ENCODE measurements at regions of chr5 and their contacts with region 1.

Region 1: GRCh38 chr5:79560771-79561524 is 47.0 kb upstream of the HOMER1 start:
- DNase-seq: peak in 1 of 2 donors; percentile 15
- ATAC-seq: peak; percentile 77 to 87 (median 85)
- H3K4me3 ChIP-seq: no peak overlapping the region
- H3K4me3 Mint-ChIP-seq: peak overlapping the region; percentile 29
- H3K27ac ChIP-seq: peak overlapping the region; percentile 73
- H3K27ac Mint-ChIP-seq: peak overlapping the region; percentile 92 to 97
- H3K4me1 ChIP-seq: peaks cover 14% of the 10 kb centered on the region
- H3K4me1 Mint-ChIP-seq: peaks cover 27 to 42% of the 10 kb centered on the region in 2 donors
- H3K27me3 ChIP-seq: no peaks in the 10 kb centered on the region
- H3K27me3 Mint-ChIP-seq: no peaks in the 10 kb centered on the region
- CTCF ChIP-seq: no peak

Region 2: GRCh38 chr5:79514391-79515105 is 46.4 kb before region 1 on chr5:
- intact Hi-C with region 1: loop called (anchors 5 kb)
- DNase-seq: peak; percentile 90 to 98
- ATAC-seq: peak; percentile 78 to 90 (median 82)
- H3K4me3 ChIP-seq: peak overlapping the region; percentile 88
- H3K4me3 Mint-ChIP-seq: peak overlapping the region; percentile 100
- H3K27ac ChIP-seq: peak overlapping the region; percentile 98
- H3K27ac Mint-ChIP-seq: peak overlapping the region; percentile 97 to 99
- H3K4me1 ChIP-seq: peaks cover 15% of the 10 kb centered on the region
- H3K4me1 Mint-ChIP-seq: peaks cover 23 to 25% of the 10 kb centered on the region in 2 donors
- H3K27me3 ChIP-seq: peaks cover 27% of the 10 kb centered on the region
- H3K27me3 Mint-ChIP-seq: peaks cover 24 to 32% of the 10 kb centered on the region in 2 donors
- CTCF ChIP-seq: no peak

Region 3: GRCh38 chr5:79612667-79613198 is 51.8 kb after region 1 on chr5:
- intact Hi-C with region 1: loop called (anchors 5 kb)
- DNase-seq: no peak
- ATAC-seq: peak in 2 of 3 donors; percentile 3 to 10
- H3K4me3 ChIP-seq: peak overlapping the region; percentile 99
- H3K4me3 Mint-ChIP-seq: peak overlapping the region; percentile 98
- H3K27ac ChIP-seq: peak overlapping the region; percentile 98
- H3K27ac Mint-ChIP-seq: peak overlapping the region; percentile 94 to 98
- H3K4me1 ChIP-seq: peaks cover 12% of the 10 kb centered on the region
- H3K4me1 Mint-ChIP-seq: peaks cover 50 to 54% of the 10 kb centered on the region in 2 donors
- H3K27me3 ChIP-seq: no peaks in the 10 kb centered on the region
- H3K27me3 Mint-ChIP-seq: no peaks in the 10 kb centered on the region
- CTCF ChIP-seq: no peak

Region 4: DNA sequence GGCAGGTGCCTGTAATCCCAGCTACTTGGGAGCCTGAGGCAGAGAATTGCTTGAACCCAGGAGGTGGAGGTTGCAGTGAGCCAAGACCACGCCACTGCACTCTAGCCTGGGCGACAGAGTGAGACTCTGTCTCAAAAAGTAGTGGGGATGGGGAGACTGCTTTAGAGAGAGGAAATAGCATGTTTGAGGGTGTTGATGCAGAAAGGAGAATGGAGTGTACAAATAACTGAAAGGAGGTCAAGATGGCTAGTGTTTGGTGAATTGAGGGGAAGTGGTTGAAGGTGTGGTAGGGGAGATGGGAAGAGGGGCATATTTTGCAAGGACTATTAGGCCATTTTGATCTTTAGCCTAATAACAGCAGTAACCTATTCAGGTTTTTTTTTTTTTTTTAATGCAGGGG is 69.5 kb after region 1 on chr5:
- intact Hi-C with region 1: loop called (anchors 5 kb)
- DNase-seq: peak; percentile 18 to 38
- ATAC-seq: peak; percentile 89 to 93 (median 91)
- H3K4me3 ChIP-seq: no peak overlapping the region
- H3K4me3 Mint-ChIP-seq: peak overlapping the region; percentile 51
- H3K27ac ChIP-seq: peak overlapping the region; percentile 65
- H3K27ac Mint-ChIP-seq: peak overlapping the region; percentile 73 to 87
- H3K4me1 ChIP-seq: peaks cover 23% of the 10 kb centered on the region
- H3K4me1 Mint-ChIP-seq: peaks cover 46 to 51% of the 10 kb centered on the region in 2 donors
- H3K27me3 ChIP-seq: no peaks in the 10 kb centered on the region
- H3K27me3 Mint-ChIP-seq: no peaks in the 10 kb centered on the region
- CTCF ChIP-seq: no peak